ENCODE measurements at regions of chr12 and their contacts with region 1.

Region 1: DNA sequence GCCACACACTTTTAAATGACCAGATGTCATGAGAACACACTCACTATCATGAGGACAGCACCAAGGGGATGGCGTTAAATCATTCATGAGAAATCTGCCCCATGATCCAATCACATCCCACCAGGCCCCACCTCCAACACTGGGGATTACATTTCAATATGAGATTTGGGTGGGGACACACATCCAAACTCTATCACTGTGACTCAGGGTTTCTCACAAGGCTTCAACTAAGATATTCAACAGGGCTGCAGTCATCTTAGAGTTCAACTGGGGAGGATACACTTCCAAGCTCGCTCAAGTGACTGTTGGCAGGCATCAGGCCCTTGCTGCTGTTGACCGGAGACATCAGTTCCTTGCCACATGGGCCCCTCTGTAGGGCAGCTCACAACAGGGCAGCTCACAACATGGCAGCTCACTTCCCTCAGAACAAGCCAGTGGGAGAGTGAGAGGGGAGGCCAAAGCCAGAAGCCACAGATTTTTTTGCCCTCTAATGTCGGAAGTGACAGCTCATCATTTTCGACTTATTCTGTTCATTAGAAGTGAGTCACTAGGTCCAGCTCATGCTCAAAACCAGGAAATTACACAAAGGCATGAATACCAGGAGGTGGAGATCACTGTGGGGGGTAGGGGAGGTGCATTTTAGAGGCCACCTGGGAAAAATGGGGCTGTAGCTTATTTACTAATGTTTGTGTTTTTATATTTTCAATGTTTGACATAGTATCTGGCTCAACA is 50.8 kb upstream of the PTHLH start:
- DNase-seq: peak; percentile 74
- H3K4me3 ChIP-seq: no peak overlapping the region
- H3K27ac ChIP-seq: peak overlapping the region; percentile 90
- H3K4me1 ChIP-seq: peaks cover 10% of the 10 kb centered on the region
- H3K27me3 ChIP-seq: no peaks in the 10 kb centered on the region
- CTCF ChIP-seq: no peak
- POLR2A ChIP-seq: no peak

Region 2: DNA sequence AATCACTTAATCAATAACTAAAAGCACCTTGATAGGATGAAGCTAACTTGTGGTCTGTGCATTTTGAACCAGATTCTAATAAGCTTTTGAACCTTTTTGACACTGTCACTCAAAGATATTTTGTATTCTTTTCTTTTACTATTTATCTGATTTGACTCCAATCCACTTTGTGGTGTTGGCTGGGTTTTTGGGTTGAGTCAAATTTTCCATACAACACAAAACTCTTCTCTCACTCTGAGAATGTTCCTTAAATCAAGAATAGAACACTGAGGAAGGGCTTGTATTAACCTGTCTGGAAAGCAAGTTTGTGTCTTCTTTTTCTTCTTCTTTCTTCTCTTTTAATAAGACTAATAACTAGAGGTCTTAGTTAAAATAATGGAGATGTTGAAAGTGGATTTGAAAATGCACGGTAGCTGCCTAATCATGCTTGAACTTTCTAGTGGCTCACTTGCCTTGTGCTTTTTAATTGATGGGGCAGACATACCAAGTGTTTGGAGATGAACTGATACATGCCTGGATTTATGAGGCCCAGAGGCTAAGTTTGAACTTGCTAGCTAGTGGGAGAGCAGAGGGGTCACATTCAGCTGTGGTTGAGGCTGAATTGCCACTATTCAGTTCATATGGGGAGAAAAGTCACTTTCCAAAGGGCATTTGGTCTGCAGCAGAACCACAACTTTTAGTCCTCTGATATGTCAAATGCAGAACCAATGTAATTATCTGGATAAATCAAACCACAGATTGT is 42.7 kb after region 1 on chr12:
- CTCF ChIA-PET with region 1: no interaction called
- POLR2A ChIA-PET with region 1: no interaction called
- dilution Hi-C with region 1: no loop called
- intact Hi-C with region 1: loop called (anchors 2 kb)
- DNase-seq: no peak
- H3K4me3 ChIP-seq: no peak overlapping the region
- H3K27ac ChIP-seq: no peak overlapping the region
- H3K4me1 ChIP-seq: peaks cover 14% of the 10 kb centered on the region
- H3K27me3 ChIP-seq: no peaks in the 10 kb centered on the region
- CTCF ChIP-seq: no peak
- POLR2A ChIP-seq: no peak

Region 3: DNA sequence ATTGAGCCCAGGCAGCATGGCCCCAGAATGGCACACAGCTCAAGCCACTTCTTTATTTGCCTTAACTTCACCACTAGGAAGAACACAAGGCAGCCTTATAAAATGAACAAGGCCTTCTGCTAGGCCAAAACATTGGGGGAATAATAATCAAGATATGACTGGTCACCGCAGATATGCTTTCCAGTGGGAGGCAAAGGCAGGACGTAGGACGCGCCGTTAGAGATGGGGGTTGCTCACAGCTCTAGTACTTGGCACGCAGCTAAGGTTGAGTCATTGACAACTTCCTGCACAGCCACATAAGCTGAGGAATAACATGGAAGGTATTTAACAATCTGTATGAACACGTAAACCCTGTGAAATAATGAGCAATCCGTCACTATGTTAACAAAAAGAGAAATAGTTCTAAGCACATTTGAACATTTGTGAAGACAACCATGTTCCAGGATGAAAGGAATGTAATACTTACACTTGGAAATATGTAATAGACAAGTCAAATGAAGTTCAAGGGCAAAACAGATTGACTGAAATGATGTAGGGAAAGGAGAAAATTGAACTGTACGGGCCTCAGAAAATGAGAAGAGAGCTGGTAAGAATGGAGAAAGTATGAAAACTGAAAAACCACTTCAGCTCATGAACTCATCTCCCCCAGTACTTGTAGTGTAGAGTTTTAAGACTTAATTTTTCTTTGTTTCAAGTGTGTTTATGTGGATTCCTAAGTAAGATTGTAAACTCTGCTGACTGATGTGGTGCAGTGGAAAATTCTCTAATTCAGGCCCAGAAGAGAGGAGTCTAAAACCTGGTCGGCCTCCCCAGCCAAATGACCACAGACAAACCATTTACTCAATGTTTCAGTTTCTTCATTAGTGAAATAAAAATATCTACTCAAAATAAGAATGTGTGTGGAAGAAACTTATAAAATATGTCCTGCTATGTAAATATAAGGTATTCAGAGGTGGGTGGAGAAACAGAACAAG is 107.6 kb after region 1 on chr12:
- CTCF ChIA-PET with region 1: no interaction called
- POLR2A ChIA-PET with region 1: no interaction called
- dilution Hi-C with region 1: no loop called
- intact Hi-C with region 1: loop called (anchors 1 kb)
- DNase-seq: peak; percentile 99
- H3K4me3 ChIP-seq: no peak overlapping the region
- H3K27ac ChIP-seq: peak overlapping the region; percentile 84
- H3K4me1 ChIP-seq: peaks cover 21% of the 10 kb centered on the region
- H3K27me3 ChIP-seq: no peaks in the 10 kb centered on the region
- CTCF ChIP-seq: no peak
- POLR2A ChIP-seq: no peak

Region 4: DNA sequence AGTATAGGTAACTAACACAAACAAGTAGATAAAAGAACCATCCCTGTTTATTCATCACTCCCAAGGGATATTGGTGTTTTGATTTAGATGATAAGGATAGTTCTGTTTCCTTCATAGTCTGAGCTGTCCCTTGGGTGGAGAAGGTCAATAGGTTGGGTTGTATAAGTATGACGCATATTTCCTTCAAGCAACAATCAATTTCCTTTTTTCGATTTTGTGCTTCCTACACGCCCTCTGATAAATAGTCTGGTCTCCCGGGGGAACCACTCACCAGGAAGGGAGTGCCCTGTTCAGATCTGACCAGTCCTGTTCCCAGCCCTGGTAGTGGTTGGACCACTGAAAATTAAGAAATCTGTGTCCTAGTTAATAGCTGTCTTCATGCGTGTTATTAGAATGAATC is 747.0 kb after region 1 on chr12:
- CTCF ChIA-PET with region 1: no interaction called
- POLR2A ChIA-PET with region 1: no interaction called
- dilution Hi-C with region 1: no loop called
- intact Hi-C with region 1: loop called (anchors 1 kb)
- DNase-seq: peak; percentile 94
- H3K4me3 ChIP-seq: no peak overlapping the region
- H3K27ac ChIP-seq: peak overlapping the region; percentile 77
- H3K4me1 ChIP-seq: peaks cover 27% of the 10 kb centered on the region
- H3K27me3 ChIP-seq: no peaks in the 10 kb centered on the region
- CTCF ChIP-seq: no peak
- POLR2A ChIP-seq: peak; percentile 58

Measured in endothelial cell of umbilical vein (primary cell).